Sigmoid colon (tissue), 7 donors: ENCODE measurements at regions of chr11 and their contacts with region 1.

Region 1: DNA sequence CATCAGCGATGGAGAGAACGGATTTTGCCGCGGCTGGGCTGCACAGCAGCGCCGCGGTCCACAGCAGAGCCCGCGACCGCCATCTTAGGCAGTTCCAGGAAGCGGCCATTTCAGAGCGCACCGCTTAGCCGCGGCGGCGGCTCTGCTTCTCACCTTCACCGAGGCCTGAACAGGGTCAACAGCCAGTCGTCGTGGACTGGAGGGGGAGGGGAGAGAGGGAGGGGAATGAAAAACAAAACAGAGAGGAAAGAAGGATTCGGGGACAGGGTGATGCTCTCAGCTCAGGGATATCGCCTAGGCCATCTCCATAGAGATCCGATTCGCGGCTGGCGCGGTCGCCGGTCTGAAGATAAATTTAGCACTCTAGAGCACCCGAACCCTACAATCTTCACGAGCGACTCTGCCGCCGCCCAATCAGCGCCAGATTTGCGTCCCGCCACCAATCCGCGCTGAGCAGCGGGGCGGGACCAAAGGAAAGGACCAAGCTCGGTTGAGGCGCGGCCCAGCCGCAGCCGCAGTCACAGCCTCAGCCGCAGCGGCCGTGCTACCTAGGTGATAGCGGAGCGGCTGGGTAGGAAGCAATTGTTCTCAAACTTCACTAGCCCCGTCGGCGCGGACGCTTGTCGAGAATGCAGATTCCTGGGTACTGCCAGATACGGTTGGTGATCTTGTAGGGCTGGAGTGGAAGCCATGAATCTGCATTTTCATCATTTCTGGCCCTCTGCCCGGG is at the start of gene ZBED5:
- DNase-seq: peak; percentile 99
- H3K4me3 ChIP-seq: peak within 1 kb of the TSS; percentile 66 to 83 (median 72)
- H3K27ac ChIP-seq: peak within 1 kb of the TSS; percentile 96 to 99 (median 96)
- H3K4me1 ChIP-seq: peaks cover 0 to 52% (median 30%) of the 10 kb centered on the region in 4 donors
- H3K27me3 ChIP-seq: no peaks in the 10 kb centered on the region
- CTCF ChIP-seq: peak in 1 of 4 experiments; percentile 23
- EP300 ChIP-seq: no peak
- POLR2A ChIP-seq: peak; percentile 97 to 99
- total RNA-seq, gene ZBED5: 34.9 to 51.7 (median 42.6) TPM

Region 2: GRCh38 chr11:10808553-10809372 is 49.1 kb before region 1 on chr11 and contains the start of gene EIF4G2:
- intact Hi-C with region 1: loop called (anchors 1 kb)
- DNase-seq: peak; percentile 99
- H3K4me3 ChIP-seq: peak within 1 kb of the TSS; percentile 83 to 99 (median 94)
- H3K27ac ChIP-seq: peak within 1 kb of the TSS; percentile 97 to 100 (median 98)
- H3K4me1 ChIP-seq: peaks cover 0 to 43% (median 39%) of the 10 kb centered on the region in 4 donors
- H3K27me3 ChIP-seq: no peaks in the 10 kb centered on the region
- CTCF ChIP-seq: no peak
- EP300 ChIP-seq: peak in 1 of 4 donors; percentile 27
- POLR2A ChIP-seq: peak; percentile 98 to 99
- total RNA-seq, gene EIF4G2: 425 to 581 (median 497) TPM